ENCODE measurements at regions of chr11 and their contacts with region 1.

Region 1: GRCh38 chr11:17354601-17354991 is 3.0 kb downstream of the NCR3LG1 start:
- DNase-seq: peak; percentile 52
- H3K4me3 Mint-ChIP-seq: peak overlapping the region; percentile 82
- H3K27ac Mint-ChIP-seq: peak overlapping the region; percentile 51
- H3K4me1 Mint-ChIP-seq: peaks cover 31% of the 10 kb centered on the region
- H3K27me3 Mint-ChIP-seq: peaks cover 4% of the 10 kb centered on the region

Region 2: GRCh38 chr11:16749666-16750065 is 604.9 kb before region 1 on chr11:
- intact Hi-C with region 1: loop called (anchors 10 kb)
- DNase-seq: no peak
- H3K4me3 Mint-ChIP-seq: no peak overlapping the region
- H3K27ac Mint-ChIP-seq: peak overlapping the region; percentile 74
- H3K4me1 Mint-ChIP-seq: peaks cover 30% of the 10 kb centered on the region
- H3K27me3 Mint-ChIP-seq: no peaks in the 10 kb centered on the region

Region 3: DNA sequence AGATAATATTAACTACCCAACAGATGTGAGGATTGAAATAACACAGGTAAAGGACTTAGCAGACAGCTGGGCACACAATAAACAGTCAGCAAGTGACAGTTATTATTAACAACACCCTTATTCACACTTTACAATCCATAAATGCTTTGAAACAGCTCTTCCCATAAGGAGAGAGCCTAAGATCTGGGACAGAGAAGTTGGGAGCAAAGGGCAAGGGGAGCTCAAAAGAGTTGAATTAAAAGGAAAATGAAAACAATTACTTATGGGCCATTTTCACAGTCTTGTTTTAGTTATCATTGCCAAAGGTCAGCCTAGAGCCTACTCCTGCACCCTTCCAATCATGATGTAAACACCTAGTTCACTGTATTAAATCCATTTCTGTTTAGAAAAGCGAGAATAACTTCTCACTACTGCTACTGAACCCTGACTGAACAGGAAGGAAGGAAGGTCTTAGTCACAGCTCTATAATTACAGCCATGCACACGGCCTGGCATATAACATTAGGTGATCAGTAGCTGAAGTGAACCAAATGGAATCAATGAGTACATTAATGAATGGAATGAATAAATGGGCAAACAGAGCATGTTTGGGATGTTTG is 451.7 kb before region 1 on chr11:
- intact Hi-C with region 1: loop called (anchors 5 kb)
- DNase-seq: no peak
- H3K4me3 Mint-ChIP-seq: peak overlapping the region; percentile 31
- H3K27ac Mint-ChIP-seq: peak overlapping the region; percentile 99
- H3K4me1 Mint-ChIP-seq: peaks cover 50% of the 10 kb centered on the region
- H3K27me3 Mint-ChIP-seq: no peaks in the 10 kb centered on the region

Region 4: DNA sequence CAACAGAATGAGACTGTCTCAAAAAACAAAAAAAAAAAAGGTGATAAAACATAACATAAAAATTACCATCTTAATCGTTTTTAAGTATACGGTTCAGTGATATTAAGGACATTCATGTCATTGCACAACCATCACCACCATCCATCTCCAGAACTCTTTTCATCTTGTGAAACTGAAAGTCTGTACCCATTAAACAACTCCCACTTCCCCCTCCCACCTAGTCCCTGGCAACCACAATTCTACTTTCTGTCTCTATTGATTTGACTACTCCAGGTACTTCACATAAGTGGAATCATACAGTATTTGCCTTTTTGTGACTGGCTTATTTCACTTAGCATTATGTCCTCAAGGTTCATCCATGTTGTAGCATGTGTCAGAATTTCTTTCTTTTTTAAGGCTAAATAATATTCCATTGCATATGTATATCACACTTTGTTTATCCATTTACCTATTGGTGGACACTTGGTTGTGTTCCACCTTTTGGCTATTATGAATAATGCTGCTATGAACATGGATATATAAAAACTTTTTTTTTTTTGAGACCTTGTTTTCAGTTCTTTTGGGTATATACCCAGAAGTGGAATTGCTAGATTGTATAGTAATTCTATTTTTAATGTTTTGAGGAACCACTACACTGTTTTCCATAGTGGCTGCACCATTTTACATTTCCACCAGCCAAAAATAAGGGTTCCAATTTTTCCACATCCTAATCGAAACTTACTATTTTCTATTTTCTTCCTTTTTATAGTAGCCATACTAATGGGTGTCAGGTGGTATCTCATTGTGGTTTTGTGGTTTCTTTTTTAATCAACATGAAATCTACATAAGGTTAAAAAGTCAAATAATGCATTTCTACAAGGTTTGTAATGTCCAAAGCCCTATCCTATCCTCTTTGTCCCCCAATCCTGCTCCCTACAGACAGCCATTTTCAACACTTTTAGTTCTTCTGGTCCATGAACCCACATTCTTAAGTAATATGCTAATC is 123.4 kb before region 1 on chr11:
- intact Hi-C with region 1: loop called (anchors 1 kb)
- DNase-seq: peak; percentile 53
- H3K4me3 Mint-ChIP-seq: no peak overlapping the region
- H3K27ac Mint-ChIP-seq: peak overlapping the region; percentile 25
- H3K4me1 Mint-ChIP-seq: peaks cover 12% of the 10 kb centered on the region
- H3K27me3 Mint-ChIP-seq: peaks cover 29% of the 10 kb centered on the region

Region 5: DNA sequence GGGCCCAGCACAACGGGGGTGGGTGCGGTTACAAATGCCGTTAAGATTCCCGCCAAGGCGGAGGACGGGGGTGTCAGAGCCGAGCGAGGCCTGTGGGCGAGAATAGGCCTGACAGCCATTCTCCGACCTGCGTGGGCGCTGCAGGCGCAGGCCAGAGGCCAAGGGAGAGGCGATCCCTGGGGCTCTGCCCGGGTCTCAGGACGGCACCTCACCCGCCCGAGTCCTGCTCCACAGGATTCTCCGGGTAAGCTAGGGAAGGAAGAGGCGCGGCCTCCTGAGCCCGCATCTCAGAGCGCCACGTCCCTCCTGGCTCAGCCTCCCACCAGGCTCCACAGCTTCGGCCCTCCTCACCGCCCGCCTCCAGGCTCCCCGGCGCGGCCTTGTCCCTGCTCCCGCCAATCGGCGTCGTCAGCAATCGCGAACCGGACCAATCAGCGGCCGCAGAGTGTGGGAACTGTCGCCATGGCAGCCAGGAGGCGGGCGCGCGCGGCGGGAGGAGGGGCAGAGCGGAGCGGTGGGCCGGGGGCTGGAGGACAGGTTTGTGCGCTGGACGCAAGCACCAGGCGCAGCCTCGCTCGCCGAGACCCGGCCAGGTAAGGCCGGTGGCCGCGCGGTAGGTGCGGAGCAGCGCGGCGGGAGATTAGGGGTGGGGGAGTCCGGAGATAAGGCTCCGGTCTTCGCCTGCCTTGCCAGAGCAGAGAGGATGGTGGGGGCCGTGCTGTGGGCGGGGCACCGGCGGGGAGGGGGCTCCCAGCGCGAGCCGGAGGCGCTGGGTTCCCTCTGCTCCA is 78.2 kb before region 1 on chr11 and contains the start of gene NUCB2:
- intact Hi-C with region 1: loop called (anchors 1 kb)
- DNase-seq: peak; percentile 95
- H3K4me3 Mint-ChIP-seq: peak within 1 kb of the TSS; percentile 91
- H3K27ac Mint-ChIP-seq: peak within 1 kb of the TSS; percentile 89
- H3K4me1 Mint-ChIP-seq: peaks cover 43% of the 10 kb centered on the region
- H3K27me3 Mint-ChIP-seq: peaks cover 3% of the 10 kb centered on the region
- total RNA-seq, gene NUCB2: 99.4 and 106 TPM in 2 replicates

Region 6: GRCh38 chr11:17368176-17368950 is 13.8 kb after region 1 on chr11:
- intact Hi-C with region 1: loop called (anchors 1 kb)
- DNase-seq: no peak
- H3K4me3 Mint-ChIP-seq: no peak overlapping the region
- H3K27ac Mint-ChIP-seq: peak overlapping the region; percentile 79
- H3K4me1 Mint-ChIP-seq: peaks cover 15% of the 10 kb centered on the region
- H3K27me3 Mint-ChIP-seq: peaks cover 1% of the 10 kb centered on the region

Region 7: GRCh38 chr11:17384002-17384511 is 29.5 kb after region 1 on chr11:
- intact Hi-C with region 1: loop called (anchors 2 kb)
- DNase-seq: peak; percentile 61
- H3K4me3 Mint-ChIP-seq: no peak overlapping the region
- H3K27ac Mint-ChIP-seq: no peak overlapping the region
- H3K4me1 Mint-ChIP-seq: no peaks in the 10 kb centered on the region
- H3K27me3 Mint-ChIP-seq: peaks cover 16% of the 10 kb centered on the region

Measured in activated T-helper 2 cell treated with anti-CD3 and anti-CD28 coated beads, Interferon-gamma antibody, Interleukin-2, Interleukin-4, amounts not matched to agents 10 μg/mL and 5 μg/mL and 100 μg/mL, durations not matched to agents 14 hours and 24 hours and 36 hours (primary cell).